Lower leg skin (tissue), 4 donors: ENCODE measurements at regions of chr2 and their contacts with region 1.

Region 1: GRCh38 chr2:55721596-55722215 is 28.1 kb upstream of the PNPT1 start:
- DNase-seq: no peak
- H3K4me3 ChIP-seq: no peak overlapping the region
- CTCF ChIP-seq: no peak
- POLR2A ChIP-seq: no peak

Region 2: GRCh38 chr2:55992465-55992864 is 270.8 kb after region 1 on chr2:
- intact Hi-C with region 1: loop called (anchors 10 kb)
- DNase-seq: peak in 1 of 2 donors; percentile 19
- H3K4me3 ChIP-seq: no peak overlapping the region
- CTCF ChIP-seq: no peak
- POLR2A ChIP-seq: no peak